Mammary epithelial cell (primary cell): ENCODE measurements at regions of chr6 and their contacts with region 1.

Region 1: DNA sequence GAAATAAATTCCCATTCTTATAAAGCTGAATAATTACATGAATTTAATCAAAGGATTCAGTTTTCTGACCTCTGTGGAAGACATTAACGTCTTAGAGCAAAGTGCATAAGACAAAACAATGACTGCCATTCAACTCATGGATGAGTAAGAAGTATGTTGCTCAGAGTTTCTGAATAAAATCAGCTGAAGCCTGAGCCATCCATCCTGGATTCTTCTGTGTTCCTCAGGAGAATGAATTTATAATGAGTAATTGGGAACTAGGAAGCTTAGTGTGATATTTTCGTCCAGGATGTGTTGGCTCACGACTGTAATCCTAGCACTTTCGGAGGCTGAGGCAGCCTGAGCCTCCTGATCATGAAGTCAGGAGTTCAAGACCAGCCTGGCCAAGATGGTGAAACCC is 62.8 kb downstream of the PERP start:
- DNase-seq: peak; percentile 96
- H3K4me3 ChIP-seq: no peak overlapping the region
- H3K27ac ChIP-seq: peak overlapping the region; percentile 74
- H3K4me1 ChIP-seq: no peaks in the 10 kb centered on the region
- H3K27me3 ChIP-seq: no peaks in the 10 kb centered on the region
- CTCF ChIP-seq: no peak

Region 2: GRCh38 chr6:137970368-137970767 is 74.1 kb before region 1 on chr6:
- CTCF ChIA-PET with region 1: no interaction called
- dilution Hi-C with region 1: no loop called
- in situ Hi-C with region 1: no loop called
- intact Hi-C with region 1: no loop called
- DNase-seq: no peak
- H3K4me3 ChIP-seq: no peak overlapping the region
- H3K27ac ChIP-seq: no peak overlapping the region
- H3K4me1 ChIP-seq: no peaks in the 10 kb centered on the region
- H3K27me3 ChIP-seq: no peaks in the 10 kb centered on the region
- CTCF ChIP-seq: no peak

Region 3: DNA sequence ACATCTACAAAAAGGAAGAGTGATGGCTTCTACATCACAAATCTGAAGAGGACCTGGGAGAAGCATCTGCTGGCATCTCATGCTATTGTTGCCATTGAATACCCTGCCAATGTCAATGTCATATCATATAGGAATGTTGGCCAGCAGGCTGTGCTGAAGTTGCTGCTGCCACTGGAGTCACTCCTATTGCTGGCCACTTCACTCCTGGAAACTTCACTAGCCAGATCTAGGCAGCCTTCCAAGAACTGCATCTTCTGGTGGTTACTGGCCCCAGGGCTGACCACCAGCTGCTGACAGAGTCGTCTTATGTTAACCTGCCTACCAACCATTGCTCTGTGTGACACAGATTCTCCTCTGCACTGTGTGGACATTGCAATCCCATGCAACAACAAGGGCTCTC is 49.1 kb before region 1 on chr6:
- CTCF ChIA-PET with region 1: no interaction called
- dilution Hi-C with region 1: loop called (anchors 5 kb)
- in situ Hi-C with region 1: no loop called
- intact Hi-C with region 1: no loop called
- DNase-seq: no peak
- H3K4me3 ChIP-seq: no peak overlapping the region
- H3K27ac ChIP-seq: no peak overlapping the region
- H3K4me1 ChIP-seq: no peaks in the 10 kb centered on the region
- H3K27me3 ChIP-seq: no peaks in the 10 kb centered on the region
- CTCF ChIP-seq: no peak

Region 4: GRCh38 chr6:138078491-138078890 is 34.0 kb after region 1 on chr6:
- CTCF ChIA-PET with region 1: no interaction called
- dilution Hi-C with region 1: loop called (anchors 5 kb)
- in situ Hi-C with region 1: no loop called
- intact Hi-C with region 1: no loop called
- DNase-seq: no peak
- H3K4me3 ChIP-seq: no peak overlapping the region
- H3K27ac ChIP-seq: no peak overlapping the region
- H3K4me1 ChIP-seq: no peaks in the 10 kb centered on the region
- H3K27me3 ChIP-seq: no peaks in the 10 kb centered on the region
- CTCF ChIP-seq: no peak

Region 5: DNA sequence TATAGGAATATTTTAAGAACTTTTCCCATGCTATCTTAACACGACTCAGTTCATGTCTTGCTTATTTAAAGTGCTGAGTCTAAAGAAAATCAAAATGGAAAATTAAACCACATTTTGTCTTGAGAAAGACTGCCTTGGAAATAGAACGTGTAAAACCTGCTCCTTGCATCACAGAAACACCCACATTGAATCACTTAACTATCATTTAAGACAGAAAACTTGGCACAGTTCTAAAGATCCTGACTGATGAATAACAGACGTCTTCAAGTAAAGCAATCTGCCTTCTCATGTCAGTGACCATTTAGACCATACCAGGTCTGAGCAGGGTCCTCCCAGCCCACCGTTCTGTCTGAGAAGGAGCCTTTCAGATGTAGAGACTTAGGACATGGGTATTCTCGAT is 55.4 kb after region 1 on chr6:
- CTCF ChIA-PET with region 1: no interaction called
- dilution Hi-C with region 1: loop called (anchors 5 kb)
- in situ Hi-C with region 1: no loop called
- intact Hi-C with region 1: no loop called
- DNase-seq: peak; percentile 85
- H3K4me3 ChIP-seq: peak overlapping the region in 2 of 3 experiments; percentile 15
- H3K27ac ChIP-seq: peak overlapping the region; percentile 75
- H3K4me1 ChIP-seq: peaks cover 37% of the 10 kb centered on the region
- H3K27me3 ChIP-seq: no peaks in the 10 kb centered on the region
- CTCF ChIP-seq: no peak

Region 6: GRCh38 chr6:138188278-138188941 is 144.0 kb after region 1 on chr6:
- CTCF ChIA-PET with region 1: no interaction called
- dilution Hi-C with region 1: no loop called
- in situ Hi-C with region 1: no loop called
- intact Hi-C with region 1: no loop called
- DNase-seq: peak; percentile 51
- H3K4me3 ChIP-seq: no peak overlapping the region
- H3K27ac ChIP-seq: no peak overlapping the region
- H3K4me1 ChIP-seq: no peaks in the 10 kb centered on the region
- H3K27me3 ChIP-seq: no peaks in the 10 kb centered on the region
- CTCF ChIP-seq: no peak